ENCODE measurements at regions of chr15 and their contacts with region 1.

Region 1: GRCh38 chr15:90583471-90584252 is 53.9 kb downstream of the CRTC3 start:
- DNase-seq: no peak
- ATAC-seq: no peak
- H3K4me3 Mint-ChIP-seq: peak overlapping the region; percentile 47
- H3K27ac Mint-ChIP-seq: peak overlapping the region; percentile 62
- H3K4me1 Mint-ChIP-seq: peaks cover 74% of the 10 kb centered on the region
- H3K27me3 Mint-ChIP-seq: no peaks in the 10 kb centered on the region
- CTCF ChIP-seq: no peak

Region 2: DNA sequence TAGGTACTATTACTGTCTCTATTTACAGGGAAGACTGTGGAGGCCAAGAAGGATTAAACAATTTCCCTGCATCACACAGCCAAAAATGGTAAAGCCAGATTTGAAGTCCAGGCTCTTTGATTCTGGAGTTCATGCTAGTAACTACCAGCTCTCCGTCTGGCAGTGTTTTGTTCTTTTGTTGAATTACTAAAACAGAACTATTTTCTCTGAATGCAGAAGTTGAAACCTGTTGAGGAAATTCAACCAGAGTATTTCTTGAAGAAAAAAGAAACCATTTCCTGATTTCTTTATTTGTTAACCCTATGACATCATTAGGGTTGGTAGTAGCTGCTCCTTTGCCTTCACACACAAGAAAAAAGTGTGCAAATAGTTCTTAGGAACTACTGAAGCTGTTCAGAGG is 19.6 kb before region 1 on chr15:
- CTCF ChIA-PET with region 1: no interaction called
- POLR2A ChIA-PET with region 1: interaction called, 5 read pairs
- intact Hi-C with region 1: loop called (anchors 2 kb)
- DNase-seq: no peak
- ATAC-seq: peak; percentile 75
- H3K4me3 Mint-ChIP-seq: peak overlapping the region; percentile 58
- H3K27ac Mint-ChIP-seq: peak overlapping the region; percentile 88
- H3K4me1 Mint-ChIP-seq: peaks cover 88% of the 10 kb centered on the region
- H3K27me3 Mint-ChIP-seq: no peaks in the 10 kb centered on the region
- CTCF ChIP-seq: no peak

Region 3: DNA sequence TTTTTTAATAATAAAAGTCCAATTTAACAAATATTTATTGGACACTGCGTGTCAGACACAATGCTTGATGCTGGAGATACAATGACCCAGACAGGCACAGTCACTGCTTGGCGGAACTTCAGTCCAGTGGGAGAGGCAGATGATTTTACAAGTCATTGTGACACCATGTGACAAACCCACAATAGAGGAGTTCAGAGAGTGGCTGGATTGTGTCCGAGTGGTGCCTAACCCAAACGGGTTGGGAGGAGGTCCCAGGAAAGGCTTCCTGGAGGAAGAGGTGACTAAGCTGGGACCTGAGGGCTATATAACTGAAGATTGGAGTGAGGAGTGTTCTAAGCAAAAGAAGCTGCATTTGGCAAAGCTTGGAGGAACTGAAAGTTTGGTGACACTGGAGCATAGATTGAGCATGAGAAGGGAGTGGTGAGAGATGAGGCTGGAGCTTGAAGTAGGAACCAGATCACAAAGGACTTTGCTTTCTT is 12.6 kb before region 1 on chr15:
- CTCF ChIA-PET with region 1: interaction called, 3 read pairs
- POLR2A ChIA-PET with region 1: interaction called, 8 read pairs
- intact Hi-C with region 1: loop called (anchors 1 kb)
- DNase-seq: peak; percentile 25
- ATAC-seq: peak; percentile 81
- H3K4me3 Mint-ChIP-seq: peak overlapping the region; percentile 68
- H3K27ac Mint-ChIP-seq: peak overlapping the region; percentile 84
- H3K4me1 Mint-ChIP-seq: peaks cover 61% of the 10 kb centered on the region
- H3K27me3 Mint-ChIP-seq: no peaks in the 10 kb centered on the region
- CTCF ChIP-seq: no peak